ENCODE measurements at regions of chr11 and their contacts with region 1.

Region 1: GRCh38 chr11:124586238-124586860 is 16.6 kb downstream of the OR8A1 start:
- DNase-seq: peak; percentile 45
- H3K4me3 Mint-ChIP-seq: no peak overlapping the region
- H3K27ac Mint-ChIP-seq: no peak overlapping the region
- H3K4me1 Mint-ChIP-seq: no peaks in the 10 kb centered on the region
- H3K27me3 Mint-ChIP-seq: peaks cover 24% of the 10 kb centered on the region

Region 2: GRCh38 chr11:124402326-124402922 is 183.9 kb before region 1 on chr11:
- CTCF ChIA-PET with region 1: interaction called, 22 read pairs
- POLR2A ChIA-PET with region 1: no interaction called
- DNase-seq: peak; percentile 59
- H3K4me3 Mint-ChIP-seq: no peak overlapping the region
- H3K27ac Mint-ChIP-seq: no peak overlapping the region
- H3K4me1 Mint-ChIP-seq: peaks cover 3% of the 10 kb centered on the region
- H3K27me3 Mint-ChIP-seq: peaks cover 6% of the 10 kb centered on the region

Region 3: DNA sequence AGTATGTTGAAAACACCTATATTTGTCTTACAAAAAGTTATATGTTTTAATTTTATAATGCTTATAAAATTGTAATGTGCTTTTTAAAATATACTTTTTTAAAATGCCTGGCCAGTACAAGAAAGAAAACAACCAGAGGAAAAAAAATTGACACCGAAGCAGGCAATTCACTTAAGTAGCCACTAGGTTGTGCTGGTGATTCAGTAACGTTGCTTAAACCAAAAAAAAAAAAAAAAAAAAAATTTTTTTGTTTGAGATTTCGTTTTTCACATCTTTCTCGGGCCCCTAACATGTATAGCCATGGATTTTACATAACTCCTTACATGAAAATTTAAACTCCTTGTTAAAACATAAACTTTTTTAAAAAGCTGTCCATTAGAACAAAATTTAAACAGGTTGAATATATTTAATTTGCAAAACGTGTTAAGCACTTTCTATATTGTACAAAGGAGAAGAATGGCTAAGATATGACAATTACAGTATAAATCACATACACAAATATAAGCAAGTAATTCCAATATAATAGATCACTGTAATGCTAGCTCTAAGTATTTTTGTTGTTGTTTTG is 170.9 kb before region 1 on chr11:
- CTCF ChIA-PET with region 1: interaction called, 15 read pairs
- POLR2A ChIA-PET with region 1: no interaction called
- DNase-seq: no peak
- H3K4me3 Mint-ChIP-seq: no peak overlapping the region
- H3K27ac Mint-ChIP-seq: no peak overlapping the region
- H3K4me1 Mint-ChIP-seq: no peaks in the 10 kb centered on the region
- H3K27me3 Mint-ChIP-seq: peaks cover 3% of the 10 kb centered on the region

Region 4: DNA sequence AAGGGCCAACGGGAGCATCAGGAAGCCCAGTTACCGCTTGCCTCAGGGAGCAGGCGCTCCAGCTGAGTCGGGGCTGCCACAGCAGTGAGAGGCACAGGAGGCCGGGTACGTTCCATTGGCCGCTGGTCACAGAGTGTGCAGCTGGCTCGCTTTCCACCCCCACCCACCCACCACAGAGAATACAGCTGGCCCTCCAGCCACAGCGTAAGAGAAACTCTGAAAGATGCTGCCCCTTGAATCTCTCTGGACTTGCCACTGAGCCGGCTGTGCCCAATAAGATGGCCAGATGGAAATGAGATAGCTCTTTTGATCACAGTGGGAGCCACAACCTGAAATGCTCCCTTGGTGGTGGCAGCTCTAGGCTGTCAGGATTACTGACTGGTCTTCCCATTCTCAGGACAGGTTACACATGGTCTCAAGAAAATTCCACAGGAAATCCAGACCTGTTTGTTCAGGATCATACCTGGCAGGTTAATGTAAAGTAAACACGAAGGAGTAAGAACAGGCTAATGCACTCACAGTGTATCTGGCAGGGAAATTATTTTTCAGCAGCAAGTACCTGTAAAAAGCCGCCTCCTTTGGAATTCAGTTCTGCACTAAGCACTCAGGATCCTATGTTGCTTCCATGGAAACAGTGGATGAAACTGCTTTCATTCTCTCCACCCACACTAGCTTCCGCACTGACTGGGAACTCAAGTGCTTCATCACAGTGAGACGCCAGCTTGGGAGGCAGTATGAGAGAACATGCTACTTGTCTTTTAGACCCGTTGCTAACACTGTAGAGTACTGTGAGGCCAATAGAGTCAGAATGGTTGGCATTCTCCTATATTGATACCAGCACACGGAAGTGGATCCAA is 70.7 kb after region 1 on chr11:
- CTCF ChIA-PET with region 1: no interaction called
- POLR2A ChIA-PET with region 1: no interaction called
- DNase-seq: no peak
- H3K4me3 Mint-ChIP-seq: no peak overlapping the region
- H3K27ac Mint-ChIP-seq: no peak overlapping the region
- H3K4me1 Mint-ChIP-seq: no peaks in the 10 kb centered on the region
- H3K27me3 Mint-ChIP-seq: no peaks in the 10 kb centered on the region